ENCODE measurements at regions of chr16 and their contacts with region 1.

Region 1: GRCh38 chr16:69105489-69106361 is at the start of gene HAS3:
- DNase-seq: peak in 3 of 5 donors; percentile 40 to 60 (median 44)
- ATAC-seq: peak; percentile 58 to 79 (median 75)
- H3K4me3 ChIP-seq: peak within 1 kb of the TSS; percentile 42 to 75 (median 60)
- H3K27ac ChIP-seq: peak within 1 kb of the TSS in 3 of 12 donors; percentile 3 to 34 (median 27)
- H3K4me1 ChIP-seq: peaks cover 0 to 32% (median 26%) of the 10 kb centered on the region in 12 donors
- H3K27me3 ChIP-seq: peaks cover 0 to 24% (median 0%) of the 10 kb centered on the region in 9 donors
- CTCF ChIP-seq: peak in 9 of 12 donors; percentile 10 to 46 (median 22)
- POLR2A ChIP-seq: peak in 1 of 2 donors; percentile 33
- total RNA-seq, gene HAS3: 0.21 to 2.0 (median 0.48) TPM

Region 2: GRCh38 chr16:68902008-68902968 is 203.4 kb before region 1 on chr16:
- intact Hi-C with region 1: loop called in 3 of 10 experiments (anchors 5 kb)
- DNase-seq: peak in 1 of 5 donors; percentile 7
- ATAC-seq: peak in 3 of 4 donors; percentile 52 to 60 (median 54)
- H3K4me3 ChIP-seq: no peak overlapping the region
- H3K27ac ChIP-seq: no peak overlapping the region
- H3K4me1 ChIP-seq: peaks cover 0 to 6% (median 0%) of the 10 kb centered on the region in 12 donors
- H3K27me3 ChIP-seq: no peaks in the 10 kb centered on the region
- CTCF ChIP-seq: peak; percentile 49 to 73 (median 62)
- POLR2A ChIP-seq: no peak

Region 3: GRCh38 chr16:68972720-68973119 is 133.0 kb before region 1 on chr16:
- intact Hi-C with region 1: loop called in 3 of 10 experiments (anchors 10 kb)
- DNase-seq: peak in 1 of 5 donors; percentile 20
- ATAC-seq: peak in 1 of 4 donors; percentile 72
- H3K4me3 ChIP-seq: no peak overlapping the region
- H3K27ac ChIP-seq: no peak overlapping the region
- H3K4me1 ChIP-seq: peaks cover 0 to 5% (median 0%) of the 10 kb centered on the region in 12 donors
- H3K27me3 ChIP-seq: no peaks in the 10 kb centered on the region
- CTCF ChIP-seq: peak in 5 of 12 donors; percentile 11 to 31 (median 28)
- POLR2A ChIP-seq: no peak

Region 4: GRCh38 chr16:69040138-69040909 is 65.4 kb before region 1 on chr16:
- intact Hi-C with region 1: loop called in 1 of 10 experiments (anchors 2 kb)
- DNase-seq: no peak
- ATAC-seq: no peak
- H3K4me3 ChIP-seq: no peak overlapping the region
- H3K27ac ChIP-seq: no peak overlapping the region
- H3K4me1 ChIP-seq: peaks cover 0 to 5% (median 0%) of the 10 kb centered on the region in 12 donors
- H3K27me3 ChIP-seq: no peaks in the 10 kb centered on the region
- CTCF ChIP-seq: no peak
- POLR2A ChIP-seq: no peak